Activated naive CD4-positive, alpha-beta T cell treated with anti-CD3 and anti-CD28 coated beads for 36 hours (primary cell): ENCODE measurements at regions of chr3 and their contacts with region 1.

Region 1: GRCh38 chr3:30620402-30621360 is 14.3 kb downstream of the TGFBR2 start:
- DNase-seq: peak; percentile 73
- H3K4me3 Mint-ChIP-seq: peak overlapping the region; percentile 58
- H3K27ac Mint-ChIP-seq: peak overlapping the region; percentile 98
- H3K4me1 Mint-ChIP-seq: peaks cover 89% of the 10 kb centered on the region
- H3K27me3 Mint-ChIP-seq: no peaks in the 10 kb centered on the region

Region 2: GRCh38 chr3:30567139-30567753 is 53.4 kb before region 1 on chr3:
- CTCF ChIA-PET with region 1: no interaction called
- intact Hi-C with region 1: no loop called
- DNase-seq: no peak
- H3K4me3 Mint-ChIP-seq: no peak overlapping the region
- H3K27ac Mint-ChIP-seq: no peak overlapping the region
- H3K4me1 Mint-ChIP-seq: no peaks in the 10 kb centered on the region
- H3K27me3 Mint-ChIP-seq: no peaks in the 10 kb centered on the region

Region 3: GRCh38 chr3:30737743-30738499 is 117.2 kb after region 1 on chr3:
- CTCF ChIA-PET with region 1: no interaction called
- intact Hi-C with region 1: loop called (anchors 2 kb)
- DNase-seq: no peak
- H3K4me3 Mint-ChIP-seq: no peak overlapping the region
- H3K27ac Mint-ChIP-seq: peak overlapping the region; percentile 74
- H3K4me1 Mint-ChIP-seq: peaks cover 42% of the 10 kb centered on the region
- H3K27me3 Mint-ChIP-seq: no peaks in the 10 kb centered on the region

Region 4: DNA sequence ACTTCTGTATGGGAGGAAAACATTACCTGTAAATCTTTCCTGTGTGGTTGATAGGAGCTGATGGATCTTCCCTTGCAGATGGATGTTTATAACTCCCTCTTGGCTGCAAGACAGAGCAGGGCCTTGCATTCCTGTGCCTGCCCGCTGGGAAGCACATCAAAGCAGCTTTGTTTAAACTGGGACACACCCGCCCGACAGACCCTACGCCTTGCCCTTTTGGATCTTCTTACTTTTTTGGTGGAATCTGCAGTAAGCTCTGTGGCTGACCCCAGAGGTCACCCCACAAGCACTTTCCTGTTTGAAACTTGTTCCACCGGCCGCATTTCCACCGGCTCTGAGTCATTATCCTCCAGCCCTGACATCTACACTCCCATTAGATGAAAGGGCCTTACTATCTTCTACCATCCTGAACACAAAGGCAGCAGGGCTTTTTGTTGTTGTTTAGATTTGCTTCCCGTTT is 668.0 kb after region 1 on chr3:
- CTCF ChIA-PET with region 1: no interaction called
- intact Hi-C with region 1: no loop called
- DNase-seq: peak; percentile 32
- H3K4me3 Mint-ChIP-seq: no peak overlapping the region
- H3K27ac Mint-ChIP-seq: no peak overlapping the region
- H3K4me1 Mint-ChIP-seq: peaks cover 11% of the 10 kb centered on the region
- H3K27me3 Mint-ChIP-seq: no peaks in the 10 kb centered on the region